Activated CD4-positive, alpha-beta memory T cell treated with anti-CD3 and anti-CD28 coated beads, Interleukin-2, amount 10 ng/mL, durations not matched to agents 7 days and 5 days (primary cell): ENCODE measurements at regions of chr10 and their contacts with region 1.

Region 1: DNA sequence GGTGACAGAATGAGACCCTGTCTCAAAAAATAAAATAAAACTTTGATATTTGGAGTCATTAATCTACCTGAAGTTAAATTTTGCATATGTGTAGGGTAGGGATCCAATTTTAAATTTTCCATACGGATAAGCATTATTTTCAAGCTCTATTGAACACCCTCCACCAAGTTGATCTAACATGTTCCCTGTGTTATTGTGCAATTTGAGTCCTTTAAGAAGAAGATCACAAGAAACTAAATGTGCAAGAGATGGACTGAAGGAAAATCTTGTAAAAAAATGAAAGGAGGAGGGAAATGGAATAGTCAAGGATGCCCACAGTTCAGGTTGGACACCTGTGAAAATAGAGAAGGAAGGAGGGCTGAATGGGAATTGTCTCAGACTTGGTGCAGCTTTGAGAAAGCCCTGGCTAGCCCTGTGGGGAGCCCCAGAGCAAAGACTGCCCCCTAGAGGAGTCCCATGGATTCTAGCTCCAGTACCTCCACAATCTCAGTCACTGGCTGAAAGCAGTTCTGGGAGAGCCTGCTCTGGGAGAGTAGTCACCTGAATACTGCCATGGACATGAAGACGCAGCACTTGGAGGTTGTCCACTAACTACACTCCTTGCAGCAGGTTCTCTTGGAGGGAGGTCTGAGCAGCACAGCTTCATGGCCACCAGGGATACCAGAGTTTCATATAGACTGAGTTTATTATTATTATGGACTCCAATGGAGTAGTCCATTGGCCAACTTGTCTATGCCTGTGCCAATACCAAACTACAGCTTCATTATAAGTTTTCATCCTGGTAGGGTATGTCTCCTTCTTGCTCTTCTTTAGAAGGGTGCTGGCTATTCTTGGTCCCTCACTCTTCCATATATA is 5.7 kb upstream of the TIAL1 start:
- DNase-seq: peak; percentile 56
- H3K4me3 Mint-ChIP-seq: no peak overlapping the region
- H3K27ac Mint-ChIP-seq: no peak overlapping the region
- H3K4me1 Mint-ChIP-seq: peaks cover 9% of the 10 kb centered on the region
- H3K27me3 Mint-ChIP-seq: no peaks in the 10 kb centered on the region

Region 2: GRCh38 chr10:119526621-119527592 is 75.6 kb before region 1 on chr10:
- CTCF ChIA-PET with region 1: no interaction called
- POLR2A ChIA-PET with region 1: no interaction called
- DNase-seq: no peak
- H3K4me3 Mint-ChIP-seq: no peak overlapping the region
- H3K27ac Mint-ChIP-seq: no peak overlapping the region
- H3K4me1 Mint-ChIP-seq: peaks cover 13% of the 10 kb centered on the region
- H3K27me3 Mint-ChIP-seq: no peaks in the 10 kb centered on the region

Region 3: GRCh38 chr10:119588071-119588470 is 14.4 kb before region 1 on chr10:
- CTCF ChIA-PET with region 1: interaction called, 21 read pairs
- POLR2A ChIA-PET with region 1: interaction called, 4 read pairs
- DNase-seq: no peak
- H3K4me3 Mint-ChIP-seq: no peak overlapping the region
- H3K27ac Mint-ChIP-seq: no peak overlapping the region
- H3K4me1 Mint-ChIP-seq: peaks cover 27% of the 10 kb centered on the region
- H3K27me3 Mint-ChIP-seq: no peaks in the 10 kb centered on the region

Region 4: GRCh38 chr10:119634219-119634544 is 31.7 kb after region 1 on chr10:
- CTCF ChIA-PET with region 1: no interaction called
- POLR2A ChIA-PET with region 1: no interaction called
- DNase-seq: no peak
- H3K4me3 Mint-ChIP-seq: no peak overlapping the region
- H3K27ac Mint-ChIP-seq: no peak overlapping the region
- H3K4me1 Mint-ChIP-seq: no peaks in the 10 kb centered on the region
- H3K27me3 Mint-ChIP-seq: peaks cover 2% of the 10 kb centered on the region